ENCODE measurements at regions of chr12 and their contacts with region 1.

Region 1: DNA sequence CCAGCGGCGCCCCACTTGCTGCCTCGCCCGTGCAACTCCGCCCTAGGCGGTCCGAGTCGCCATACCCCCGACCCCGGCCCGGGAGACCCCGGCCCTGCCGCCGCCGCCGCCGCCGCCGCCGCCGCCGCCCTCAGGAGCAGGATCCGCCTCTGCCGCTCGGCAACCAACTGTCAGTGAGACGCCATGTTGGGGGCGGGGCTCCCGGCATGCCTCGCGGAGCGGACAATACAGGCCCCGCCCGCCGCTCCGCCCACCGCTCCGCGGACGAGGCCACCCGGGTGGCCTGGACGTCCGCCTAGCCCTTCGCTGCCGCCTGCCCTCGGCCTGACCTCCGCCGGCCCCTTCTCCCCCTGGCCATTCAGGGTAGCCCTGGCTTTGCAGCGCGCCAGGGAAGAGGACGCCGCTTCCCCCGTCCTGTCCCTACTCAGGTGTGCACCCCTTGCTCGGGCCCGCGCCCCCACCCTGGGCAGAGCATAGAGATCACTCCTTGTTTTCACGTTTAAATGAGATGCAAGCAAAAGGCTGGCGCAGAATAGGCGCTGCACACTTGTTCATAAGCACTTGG is at the start of gene HECTD4:
- DNase-seq: peak; percentile 75
- ATAC-seq: peak; percentile 98
- H3K4me3 ChIP-seq: peak within 1 kb of the TSS; percentile 66
- H3K27ac ChIP-seq: peak within 1 kb of the TSS; percentile 91
- H3K4me1 ChIP-seq: peaks cover 8% of the 10 kb centered on the region
- H3K27me3 ChIP-seq: no peaks in the 10 kb centered on the region
- CTCF ChIP-seq: no peak
- POLR2A ChIP-seq: no peak
- RAD21 ChIP-seq: no peak
- total RNA-seq, gene HECTD4: 11.9 and 12.9 TPM in 2 replicates

Region 2: DNA sequence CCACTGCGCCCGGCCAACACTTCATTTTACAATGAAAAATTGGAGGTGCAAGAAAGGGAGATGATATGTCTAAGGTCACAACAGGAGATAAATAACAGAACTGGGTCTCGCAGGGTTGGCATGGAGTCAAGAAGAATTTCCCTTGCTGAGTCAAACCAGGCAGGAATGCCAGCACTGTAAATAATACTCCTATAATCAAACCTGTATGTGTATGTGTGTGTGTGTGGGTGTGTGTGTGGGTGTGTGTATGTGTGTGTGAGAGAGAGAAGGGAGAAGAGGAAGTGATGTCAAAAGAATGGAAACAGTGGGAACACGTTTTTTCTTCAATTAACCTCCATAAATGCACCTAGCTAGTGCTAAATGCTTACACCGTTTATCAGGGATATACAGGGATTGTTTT is 439.8 kb before region 1 on chr12:
- CTCF ChIA-PET with region 1: no interaction called
- POLR2A ChIA-PET with region 1: no interaction called
- dilution Hi-C with region 1: no loop called
- in situ Hi-C with region 1: no loop called
- intact Hi-C with region 1: loop called (anchors 1 kb)
- DNase-seq: peak; percentile 94
- ATAC-seq: peak; percentile 81
- H3K4me3 ChIP-seq: no peak overlapping the region
- H3K27ac ChIP-seq: no peak overlapping the region
- H3K4me1 ChIP-seq: peaks cover 4% of the 10 kb centered on the region
- H3K27me3 ChIP-seq: no peaks in the 10 kb centered on the region
- CTCF ChIP-seq: no peak
- POLR2A ChIP-seq: no peak
- RAD21 ChIP-seq: no peak

Region 3: DNA sequence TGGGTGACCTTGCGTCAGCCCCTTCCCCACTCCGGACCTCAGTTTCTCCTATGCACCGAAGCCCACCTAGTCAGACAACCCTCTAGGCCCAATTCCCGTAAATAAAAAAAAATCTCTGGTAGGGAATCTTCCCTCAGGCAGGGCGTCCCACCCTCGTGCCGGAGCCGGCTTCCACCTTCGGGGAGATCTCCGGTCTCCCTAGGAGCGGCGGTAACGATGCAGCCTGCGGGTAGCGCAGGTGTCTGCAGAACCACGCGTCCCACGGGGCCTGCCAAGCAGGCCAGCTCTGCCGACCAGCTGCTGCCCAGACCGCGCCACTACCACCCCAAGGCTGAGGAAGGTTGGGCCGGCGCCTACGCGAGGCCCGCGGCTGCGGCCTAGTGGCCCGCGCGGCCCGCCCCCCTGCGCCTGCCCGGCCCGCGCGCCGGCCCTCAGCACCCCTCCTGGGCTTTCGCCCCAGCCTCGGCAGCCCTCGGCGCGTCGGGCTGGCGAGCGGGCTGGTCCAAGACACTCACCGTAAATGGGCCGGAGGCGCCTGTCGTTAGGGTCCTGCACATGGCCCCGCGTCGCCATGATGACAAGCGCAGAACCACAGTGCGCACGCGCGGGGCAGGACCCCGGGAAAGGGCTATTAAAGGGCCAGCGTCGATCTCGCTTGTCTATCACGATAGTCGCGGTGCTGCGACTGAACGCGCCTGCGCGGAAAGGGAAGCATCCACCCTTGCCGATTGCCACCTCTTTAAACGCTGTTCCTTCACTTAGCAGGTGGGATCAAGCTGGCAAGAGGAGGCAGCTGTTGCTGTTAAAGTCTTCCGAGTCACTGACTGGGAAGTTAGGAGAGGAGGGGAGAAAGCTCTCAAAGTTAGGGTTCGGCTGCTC is 273.9 kb before region 1 on chr12 and contains the start of gene NAA25:
- CTCF ChIA-PET with region 1: no interaction called
- POLR2A ChIA-PET with region 1: no interaction called
- dilution Hi-C with region 1: no loop called
- in situ Hi-C with region 1: no loop called
- intact Hi-C with region 1: loop called (anchors 10 kb)
- DNase-seq: peak; percentile 79
- ATAC-seq: peak; percentile 85
- H3K4me3 ChIP-seq: peak within 1 kb of the TSS; percentile 66
- H3K27ac ChIP-seq: peak within 1 kb of the TSS; percentile 99
- H3K4me1 ChIP-seq: peaks cover 19% of the 10 kb centered on the region
- H3K27me3 ChIP-seq: no peaks in the 10 kb centered on the region
- CTCF ChIP-seq: no peak
- POLR2A ChIP-seq: peak; percentile 58; the same call in 1 of the 2 replicates
- RAD21 ChIP-seq: no peak
- total RNA-seq, gene NAA25: 25.5 and 28.3 TPM in 2 replicates

Region 4: DNA sequence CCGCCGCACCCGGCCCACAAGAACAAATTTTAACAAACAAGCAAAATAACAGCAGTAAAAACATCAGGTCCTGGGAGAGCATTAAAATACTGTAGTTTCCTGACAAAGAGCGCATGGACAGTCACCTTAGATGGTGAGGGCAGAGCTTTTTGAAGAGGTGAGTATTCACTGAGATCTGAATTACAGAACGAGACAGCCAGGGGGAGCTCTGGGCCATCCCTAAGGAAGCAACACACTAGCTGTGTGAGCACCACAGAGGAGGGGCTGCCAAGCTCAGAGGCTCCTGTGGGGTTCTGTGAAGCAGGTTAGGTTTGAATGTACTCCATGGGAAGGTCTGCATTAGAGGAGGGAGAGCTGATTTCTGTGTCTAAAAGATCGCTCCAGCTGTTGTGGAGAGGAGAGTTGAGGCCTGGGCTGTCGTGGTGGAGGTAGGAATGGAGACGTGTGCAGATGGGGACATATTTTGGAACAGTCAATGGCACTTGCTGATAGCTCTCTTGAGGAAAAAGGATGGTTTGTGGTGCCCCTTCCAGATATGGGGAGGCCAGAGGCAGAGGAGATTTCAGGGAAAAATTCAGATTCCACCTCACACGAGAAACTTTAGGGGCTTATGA is 184.1 kb before region 1 on chr12:
- CTCF ChIA-PET with region 1: interaction called, 13 read pairs
- POLR2A ChIA-PET with region 1: no interaction called
- dilution Hi-C with region 1: no loop called
- in situ Hi-C with region 1: loop called (anchors 5 kb)
- intact Hi-C with region 1: loop called (anchors 1 kb)
- DNase-seq: peak; percentile 51
- ATAC-seq: peak; percentile 95
- H3K4me3 ChIP-seq: no peak overlapping the region
- H3K27ac ChIP-seq: no peak overlapping the region
- H3K4me1 ChIP-seq: no peaks in the 10 kb centered on the region
- H3K27me3 ChIP-seq: no peaks in the 10 kb centered on the region
- CTCF ChIP-seq: peak; percentile 53
- POLR2A ChIP-seq: no peak
- RAD21 ChIP-seq: peak; percentile 62

Region 5: DNA sequence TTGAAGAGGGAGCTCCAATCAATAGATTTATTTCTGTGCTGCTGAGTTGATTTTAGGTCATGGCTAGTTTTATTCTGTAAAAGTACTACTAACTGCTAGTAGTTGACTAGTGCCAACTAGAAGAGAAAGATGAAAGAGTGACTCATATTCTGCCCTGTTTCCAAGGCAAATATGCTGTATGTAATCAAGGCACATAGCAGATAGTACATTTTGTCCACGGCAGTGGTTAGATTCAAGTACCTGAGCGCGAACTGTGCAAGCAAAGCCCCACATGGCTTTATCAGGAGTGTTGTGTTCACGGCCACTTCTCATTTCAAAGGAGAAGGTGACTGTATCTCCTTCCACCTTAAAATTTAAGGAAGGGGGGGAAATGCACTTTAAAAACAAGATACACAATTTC is 130.1 kb before region 1 on chr12:
- CTCF ChIA-PET with region 1: no interaction called
- POLR2A ChIA-PET with region 1: no interaction called
- dilution Hi-C with region 1: no loop called
- in situ Hi-C with region 1: no loop called
- intact Hi-C with region 1: loop called (anchors 5 kb)
- DNase-seq: peak; percentile 59
- ATAC-seq: peak; percentile 66
- H3K4me3 ChIP-seq: no peak overlapping the region
- H3K27ac ChIP-seq: no peak overlapping the region
- H3K4me1 ChIP-seq: no peaks in the 10 kb centered on the region
- H3K27me3 ChIP-seq: no peaks in the 10 kb centered on the region
- CTCF ChIP-seq: no peak
- POLR2A ChIP-seq: no peak
- RAD21 ChIP-seq: no peak

Region 6: GRCh38 chr12:112261559-112261958 is 120.8 kb before region 1 on chr12:
- CTCF ChIA-PET with region 1: interaction called, 3 read pairs
- POLR2A ChIA-PET with region 1: no interaction called
- dilution Hi-C with region 1: no loop called
- in situ Hi-C with region 1: loop called (anchors 10 kb)
- intact Hi-C with region 1: no loop called
- DNase-seq: no peak
- ATAC-seq: no peak
- H3K4me3 ChIP-seq: no peak overlapping the region
- H3K27ac ChIP-seq: no peak overlapping the region
- H3K4me1 ChIP-seq: no peaks in the 10 kb centered on the region
- H3K27me3 ChIP-seq: no peaks in the 10 kb centered on the region
- CTCF ChIP-seq: peak; percentile 13; the same call in 1 of the 2 replicates
- POLR2A ChIP-seq: no peak
- RAD21 ChIP-seq: no peak

Region 7: GRCh38 chr12:112294793-112295192 is 87.5 kb before region 1 on chr12:
- CTCF ChIA-PET with region 1: interaction called, 5 read pairs
- POLR2A ChIA-PET with region 1: no interaction called
- dilution Hi-C with region 1: no loop called
- in situ Hi-C with region 1: no loop called
- intact Hi-C with region 1: loop called (anchors 1 kb)
- DNase-seq: peak; percentile 51
- ATAC-seq: no peak
- H3K4me3 ChIP-seq: no peak overlapping the region
- H3K27ac ChIP-seq: no peak overlapping the region
- H3K4me1 ChIP-seq: no peaks in the 10 kb centered on the region
- H3K27me3 ChIP-seq: no peaks in the 10 kb centered on the region
- CTCF ChIP-seq: peak; percentile 43
- POLR2A ChIP-seq: no peak
- RAD21 ChIP-seq: peak; percentile 54

Region 8: DNA sequence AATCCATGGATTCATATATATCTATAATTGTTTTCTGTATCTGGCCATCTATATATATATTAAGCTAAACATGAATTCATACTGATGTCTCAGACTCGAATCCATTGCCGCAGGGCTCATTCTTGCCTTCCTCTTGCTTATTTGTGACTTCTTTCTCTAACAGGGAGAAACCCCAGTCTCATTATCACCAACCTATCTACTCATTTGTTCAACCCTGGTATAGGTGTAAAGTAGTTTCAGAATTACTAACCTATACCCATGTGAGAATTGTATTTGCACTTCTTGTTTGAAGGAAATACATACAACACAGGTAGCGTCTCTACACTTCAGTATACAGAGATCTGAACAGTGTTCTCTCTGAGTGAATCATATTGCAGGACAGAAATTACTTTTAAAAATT is 114.2 kb after region 1 on chr12:
- CTCF ChIA-PET with region 1: no interaction called
- POLR2A ChIA-PET with region 1: no interaction called
- dilution Hi-C with region 1: no loop called
- in situ Hi-C with region 1: no loop called
- intact Hi-C with region 1: no loop called
- DNase-seq: no peak
- ATAC-seq: no peak
- H3K4me3 ChIP-seq: no peak overlapping the region
- H3K27ac ChIP-seq: no peak overlapping the region
- H3K4me1 ChIP-seq: no peaks in the 10 kb centered on the region
- H3K27me3 ChIP-seq: no peaks in the 10 kb centered on the region
- CTCF ChIP-seq: no peak
- POLR2A ChIP-seq: no peak
- RAD21 ChIP-seq: no peak

Measured in IMR-90 (cell line).